ENCODE measurements at regions of chr2 and their contacts with region 1.

Region 1: DNA sequence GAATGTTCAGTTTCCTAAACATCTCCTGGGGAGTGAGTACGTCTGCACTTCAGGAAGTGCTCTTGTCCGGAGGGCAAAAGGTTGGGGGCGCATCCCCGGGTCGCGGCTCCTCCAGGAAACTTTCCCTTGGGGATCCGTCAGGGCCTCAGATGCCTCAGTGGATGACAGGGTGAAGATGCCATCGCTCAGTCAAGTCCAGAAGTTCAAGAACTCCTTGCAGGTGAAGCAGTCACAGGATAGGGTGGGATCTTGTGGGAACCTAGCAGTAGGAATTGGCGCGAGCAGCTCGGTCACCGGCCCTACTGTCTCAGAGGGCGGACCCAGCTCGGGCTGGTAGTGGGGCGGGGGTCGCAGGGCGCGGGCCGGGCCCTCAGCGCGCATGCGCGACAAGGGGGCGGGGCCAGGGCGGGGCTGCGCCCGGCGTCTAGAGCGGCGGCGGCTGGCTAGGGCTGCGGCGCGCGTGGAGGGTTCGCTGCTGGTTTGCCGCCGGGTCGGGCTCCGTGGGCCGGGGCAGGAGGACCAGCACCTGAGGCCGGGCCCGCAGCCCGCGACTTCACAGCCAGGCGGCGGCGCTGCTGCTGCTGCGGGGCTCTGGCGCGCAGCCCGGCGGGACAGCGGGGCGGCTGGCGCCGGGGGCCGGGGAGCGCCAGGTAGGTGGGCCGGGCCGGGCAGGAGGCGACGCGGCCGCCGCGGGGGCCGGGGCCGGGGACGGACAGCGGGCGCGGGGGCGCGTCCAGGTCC is at the start of gene INPP4A:
- DNase-seq: peak; percentile 75 to 82 (median 77)
- H3K4me3 ChIP-seq: peak within 1 kb of the TSS; percentile 46 to 95 (median 76)
- H3K27ac ChIP-seq: peak within 1 kb of the TSS in 4 of 5 donors; percentile 43 to 92 (median 76)
- H3K4me1 ChIP-seq: peaks cover 19 to 25% of the 10 kb centered on the region in 2 donors
- H3K27me3 ChIP-seq: no peaks in the 10 kb centered on the region
- CTCF ChIP-seq: peak in 2 of 6 experiments; percentile 19 to 47
- POLR2A ChIP-seq: peak; percentile 45 to 49
- total RNA-seq, gene INPP4A: 17.8 to 40.5 (median 32.1) TPM

Region 2: GRCh38 chr2:98608116-98608999 is 163.8 kb after region 1 on chr2 and contains the starts of genes COA5 and UNC50:
- intact Hi-C with region 1: loop called in 1 of 2 experiments (anchors 10 kb)
- DNase-seq: peak; percentile 87 to 92 (median 90)
- H3K4me3 ChIP-seq: peak within 1 kb of the TSS; percentile 79 to 97 (median 86)
- H3K27ac ChIP-seq: peak within 1 kb of the TSS; percentile 69 to 98 (median 97)
- H3K4me1 ChIP-seq: peaks cover 24 to 59% of the 10 kb centered on the region in 2 donors
- H3K27me3 ChIP-seq: no peaks in the 10 kb centered on the region
- CTCF ChIP-seq: peak in 1 of 6 experiments; percentile 0
- POLR2A ChIP-seq: peak; percentile 74 to 83
- total RNA-seq, gene COA5: 18.9 to 70.0 (median 40.4) TPM
- total RNA-seq, gene UNC50: 48.6 to 72.4 (median 55.2) TPM

Measured in adrenal gland (tissue), 19 donors.